ENCODE measurements at regions of chr20 and their contacts with region 1.

Region 1: DNA sequence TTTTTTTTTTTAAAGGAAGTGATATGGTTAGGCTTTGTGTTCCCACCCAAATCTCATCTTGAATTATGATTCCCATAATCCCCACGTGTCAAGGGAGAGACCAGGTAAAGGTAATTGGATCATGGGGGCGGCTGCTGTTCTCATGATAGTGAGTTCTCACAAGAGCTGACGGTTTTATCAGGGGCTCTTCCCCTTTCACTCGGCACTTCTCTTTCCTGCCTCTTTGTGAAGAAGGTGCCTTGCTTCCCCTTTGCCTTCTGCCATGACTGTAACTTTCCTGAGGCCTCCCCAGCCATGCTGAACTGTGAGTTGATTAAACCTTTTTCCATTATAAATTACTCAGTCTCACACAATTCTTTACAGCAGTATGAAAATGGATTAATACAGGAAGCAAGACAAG is 64.3 kb downstream of the ZFP64 start:
- DNase-seq: no peak
- ATAC-seq: no peak
- H3K4me3 ChIP-seq: no peak overlapping the region
- H3K27ac ChIP-seq: no peak overlapping the region
- H3K4me1 ChIP-seq: no peaks in the 10 kb centered on the region
- H3K27me3 ChIP-seq: no peaks in the 10 kb centered on the region
- CTCF ChIP-seq: no peak
- EP300 ChIP-seq: no peak
- POLR2A ChIP-seq: no peak
- RAD21 ChIP-seq: no peak

Region 2: GRCh38 chr20:52031563-52032303 is 95.6 kb before region 1 on chr20:
- CTCF ChIA-PET with region 1: no interaction called
- POLR2A ChIA-PET with region 1: no interaction called
- RAD21 ChIA-PET with region 1: no interaction called
- SMC1A ChIA-PET with region 1: no interaction called
- in situ Hi-C with region 1: no loop called
- intact Hi-C with region 1: no loop called
- DNase-seq: no peak
- ATAC-seq: no peak
- H3K4me3 ChIP-seq: no peak overlapping the region
- H3K27ac ChIP-seq: no peak overlapping the region
- H3K4me1 ChIP-seq: no peaks in the 10 kb centered on the region
- H3K27me3 ChIP-seq: no peaks in the 10 kb centered on the region
- CTCF ChIP-seq: no peak
- EP300 ChIP-seq: no peak
- POLR2A ChIP-seq: no peak
- RAD21 ChIP-seq: no peak

Region 3: DNA sequence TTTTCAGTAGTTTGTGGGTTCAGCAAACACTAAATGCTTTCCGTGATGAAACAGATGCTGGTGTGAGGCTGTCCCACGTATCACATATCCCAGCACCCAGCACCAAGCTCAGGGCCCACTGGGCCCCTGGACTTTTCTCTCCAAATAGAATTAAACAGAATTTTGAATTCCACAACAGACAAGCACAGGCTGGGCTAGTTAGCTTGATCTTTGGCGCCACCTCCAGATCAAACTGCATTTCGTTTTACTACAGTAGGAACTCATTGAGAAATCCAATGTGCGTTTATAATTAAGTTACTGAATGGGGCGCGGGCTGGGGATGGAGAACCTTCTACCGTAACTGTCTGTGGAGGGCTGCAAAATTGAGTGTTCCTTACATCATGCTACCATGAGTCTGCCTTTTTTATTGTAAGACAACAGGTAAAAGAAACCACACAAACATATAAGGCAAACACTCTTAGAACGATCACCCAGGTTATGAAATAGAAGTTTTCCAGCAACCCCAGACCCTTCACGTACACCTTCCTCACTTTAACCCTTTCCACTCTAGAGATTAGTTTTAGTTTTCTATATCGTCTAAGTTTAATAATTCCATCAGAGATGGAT is 43.6 kb before region 1 on chr20:
- CTCF ChIA-PET with region 1: no interaction called
- POLR2A ChIA-PET with region 1: no interaction called
- RAD21 ChIA-PET with region 1: no interaction called
- SMC1A ChIA-PET with region 1: no interaction called
- in situ Hi-C with region 1: no loop called
- intact Hi-C with region 1: no loop called
- DNase-seq: no peak
- ATAC-seq: peak; percentile 34; the same call in 1 of the 3 replicates
- H3K4me3 ChIP-seq: no peak overlapping the region
- H3K27ac ChIP-seq: no peak overlapping the region
- H3K4me1 ChIP-seq: no peaks in the 10 kb centered on the region
- H3K27me3 ChIP-seq: no peaks in the 10 kb centered on the region
- CTCF ChIP-seq: peak; percentile 35 to 52 (median 40); a peak in 5 of 6 replicates
- EP300 ChIP-seq: no peak
- POLR2A ChIP-seq: no peak
- RAD21 ChIP-seq: peak; percentile 60

Region 4: DNA sequence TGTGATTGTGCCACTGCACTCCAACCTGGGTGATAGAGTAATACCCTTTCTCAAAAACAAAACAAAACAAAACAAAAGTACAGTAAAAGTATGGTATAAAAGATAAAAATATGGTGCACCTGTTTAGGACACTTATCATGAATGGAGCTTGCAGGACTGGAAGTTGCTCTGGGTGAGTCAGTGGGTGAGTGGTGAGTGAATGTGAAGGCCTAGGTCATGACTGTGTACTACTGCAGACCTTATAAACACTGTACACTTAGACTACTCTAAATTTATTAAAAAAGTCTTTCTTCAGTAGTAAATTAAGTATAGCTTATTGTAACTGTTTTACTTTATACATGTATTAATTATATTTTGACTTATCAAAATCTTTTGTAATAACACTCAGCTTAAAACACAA is 18.3 kb after region 1 on chr20:
- CTCF ChIA-PET with region 1: interaction called, 35 read pairs
- POLR2A ChIA-PET with region 1: no interaction called
- RAD21 ChIA-PET with region 1: interaction called, 6 read pairs
- SMC1A ChIA-PET with region 1: interaction called, 7 read pairs
- in situ Hi-C with region 1: no loop called
- intact Hi-C with region 1: loop called (anchors 2 kb)
- DNase-seq: no peak
- ATAC-seq: no peak
- H3K4me3 ChIP-seq: no peak overlapping the region
- H3K27ac ChIP-seq: no peak overlapping the region
- H3K4me1 ChIP-seq: no peaks in the 10 kb centered on the region
- H3K27me3 ChIP-seq: no peaks in the 10 kb centered on the region
- CTCF ChIP-seq: no peak
- EP300 ChIP-seq: no peak
- POLR2A ChIP-seq: no peak
- RAD21 ChIP-seq: no peak

Region 5: DNA sequence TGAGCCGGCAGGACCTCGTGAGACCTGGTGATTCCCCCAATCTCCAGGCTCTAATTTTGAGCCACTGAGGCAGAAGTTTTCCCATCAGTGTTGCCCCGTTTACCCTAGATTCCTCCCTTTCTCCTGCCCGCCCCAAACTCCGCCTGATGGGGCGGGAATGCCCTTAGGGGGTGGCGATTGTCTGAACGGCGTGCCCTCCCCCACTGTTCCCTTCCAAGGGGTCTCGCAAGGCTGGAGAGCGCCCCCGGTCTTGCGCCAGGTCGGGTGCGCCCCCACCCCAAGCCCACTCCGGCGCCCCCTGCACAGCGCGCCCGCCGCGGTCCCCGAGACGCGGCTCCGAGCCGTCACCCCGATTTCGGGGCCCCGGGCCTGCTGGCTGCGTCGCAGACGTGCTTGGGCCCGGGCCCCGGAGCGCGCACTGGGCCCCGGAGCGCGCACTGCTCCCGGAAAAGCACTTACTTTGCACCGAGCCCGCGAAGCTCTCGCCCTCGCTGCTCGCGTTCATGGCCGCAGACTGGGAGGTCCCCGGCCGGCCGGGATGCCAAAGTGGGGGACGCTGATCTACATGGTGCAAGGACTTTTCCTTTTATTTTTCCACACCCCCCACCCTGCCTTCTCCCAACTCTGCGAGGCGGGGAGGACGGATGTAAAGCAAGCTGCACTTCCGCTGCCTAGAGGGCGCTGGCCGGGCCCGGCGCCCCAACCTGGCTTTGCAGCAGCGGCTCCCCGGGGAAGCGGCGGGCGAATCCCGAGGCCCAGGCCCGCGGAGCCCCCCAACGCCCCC is 64.0 kb after region 1 on chr20 and contains the start of gene ZFP64:
- CTCF ChIA-PET with region 1: interaction called, 15 read pairs
- POLR2A ChIA-PET with region 1: no interaction called
- RAD21 ChIA-PET with region 1: interaction called, 15 read pairs
- SMC1A ChIA-PET with region 1: interaction called, 10 read pairs
- in situ Hi-C with region 1: no loop called
- intact Hi-C with region 1: loop called (anchors 5 kb)
- DNase-seq: no peak
- ATAC-seq: peak; percentile 85
- H3K4me3 ChIP-seq: peak within 1 kb of the TSS; percentile 91
- H3K27ac ChIP-seq: peak within 1 kb of the TSS; percentile 93
- H3K4me1 ChIP-seq: peaks cover 3% of the 10 kb centered on the region; the same call in 1 of the 2 replicates
- H3K27me3 ChIP-seq: no peaks in the 10 kb centered on the region
- CTCF ChIP-seq: peak; percentile 64 to 77 (median 71); a peak in 5 of 6 replicates
- EP300 ChIP-seq: 0 out of 4 replicates have a peak, but pooled peaks of 1 of the 2 experiments have one; percentile 30
- POLR2A ChIP-seq: peak; percentile 80
- RAD21 ChIP-seq: peak; percentile 31; the same call in 1 of the 2 replicates
- polyA plus RNA-seq, gene ZFP64: 2.3 to 3.3 TPM

Region 6: GRCh38 chr20:52207020-52207810 is 79.9 kb after region 1 on chr20:
- CTCF ChIA-PET with region 1: interaction called, 19 read pairs
- POLR2A ChIA-PET with region 1: interaction called, 3 read pairs
- RAD21 ChIA-PET with region 1: interaction called, 11 read pairs
- SMC1A ChIA-PET with region 1: interaction called, 7 read pairs
- in situ Hi-C with region 1: no loop called
- intact Hi-C with region 1: no loop called
- DNase-seq: no peak
- ATAC-seq: no peak
- H3K4me3 ChIP-seq: no peak overlapping the region
- H3K27ac ChIP-seq: no peak overlapping the region
- H3K4me1 ChIP-seq: no peaks in the 10 kb centered on the region
- H3K27me3 ChIP-seq: no peaks in the 10 kb centered on the region
- CTCF ChIP-seq: no peak
- EP300 ChIP-seq: no peak
- POLR2A ChIP-seq: no peak
- RAD21 ChIP-seq: no peak

Region 7: GRCh38 chr20:52242237-52243230 is 115.2 kb after region 1 on chr20:
- CTCF ChIA-PET with region 1: interaction called, 12 read pairs
- POLR2A ChIA-PET with region 1: no interaction called
- RAD21 ChIA-PET with region 1: interaction called, 7 read pairs
- SMC1A ChIA-PET with region 1: interaction called, 6 read pairs
- in situ Hi-C with region 1: no loop called
- intact Hi-C with region 1: loop called (anchors 1 kb)
- DNase-seq: no peak
- ATAC-seq: no peak
- H3K4me3 ChIP-seq: no peak overlapping the region
- H3K27ac ChIP-seq: no peak overlapping the region
- H3K4me1 ChIP-seq: no peaks in the 10 kb centered on the region
- H3K27me3 ChIP-seq: no peaks in the 10 kb centered on the region
- CTCF ChIP-seq: peak in 2 of 3 experiments; percentile 6 to 35; a peak in 3 of 6 replicates
- EP300 ChIP-seq: no peak
- POLR2A ChIP-seq: no peak
- RAD21 ChIP-seq: no peak

Region 8: DNA sequence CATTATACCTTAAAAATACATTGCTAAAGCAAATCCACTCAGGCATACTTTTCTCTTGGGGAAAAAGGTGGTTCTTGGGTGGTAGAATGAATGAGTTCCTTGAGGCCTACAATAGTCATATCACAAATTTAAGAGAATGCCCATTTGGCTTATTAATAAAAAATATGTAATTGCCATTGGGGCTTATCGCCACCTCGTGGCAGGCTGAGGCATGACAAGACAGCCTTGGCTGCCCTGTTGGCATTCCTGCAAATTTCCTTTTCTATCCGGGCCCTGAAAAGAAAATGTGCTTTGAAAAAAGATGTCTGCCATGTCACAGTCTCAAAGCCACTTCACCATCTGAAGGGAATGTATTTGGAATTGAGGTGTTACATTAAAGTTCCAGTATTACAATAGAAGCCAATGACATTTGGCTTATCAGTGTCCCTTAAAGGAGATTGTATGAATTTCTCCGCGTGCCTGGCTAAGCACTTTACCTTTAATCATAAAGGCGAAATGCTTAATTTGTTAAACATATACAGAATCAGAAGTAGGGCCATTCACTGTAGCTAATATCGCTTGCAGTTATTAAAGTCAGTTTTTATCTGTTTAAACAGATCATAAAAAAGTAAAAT is 252.5 kb after region 1 on chr20:
- CTCF ChIA-PET with region 1: interaction called, 22 read pairs
- POLR2A ChIA-PET with region 1: no interaction called
- RAD21 ChIA-PET with region 1: interaction called, 5 read pairs
- SMC1A ChIA-PET with region 1: interaction called, 6 read pairs
- in situ Hi-C with region 1: loop called (anchors 5 kb)
- intact Hi-C with region 1: loop called (anchors 1 kb)
- DNase-seq: no peak
- ATAC-seq: no peak
- H3K4me3 ChIP-seq: no peak overlapping the region
- H3K27ac ChIP-seq: no peak overlapping the region
- H3K4me1 ChIP-seq: no peaks in the 10 kb centered on the region
- H3K27me3 ChIP-seq: no peaks in the 10 kb centered on the region
- CTCF ChIP-seq: peak; percentile 82 to 92 (median 90)
- EP300 ChIP-seq: no peak
- POLR2A ChIP-seq: no peak
- RAD21 ChIP-seq: peak; percentile 65

Measured in GM12878 (cell line).